Heart right ventricle (tissue), 16 donors: ENCODE measurements at regions of chr14 and their contacts with region 1.

Region 1: GRCh38 chr14:20413045-20413799 is at the start of gene TEP1:
- DNase-seq: peak; percentile 89
- ATAC-seq: peak; percentile 94 to 98 (median 98)
- H3K4me3 ChIP-seq: peak within 1 kb of the TSS; percentile 63 to 92 (median 75)
- H3K27ac ChIP-seq: peak within 1 kb of the TSS; percentile 40 to 98 (median 95)
- H3K4me1 ChIP-seq: peaks cover 0 to 35% (median 13%) of the 10 kb centered on the region in 9 donors
- H3K27me3 ChIP-seq: no peaks in the 10 kb centered on the region
- CTCF ChIP-seq: no peak
- total RNA-seq, gene TEP1: 6.9 to 17.8 (median 8.6) TPM

Region 2: GRCh38 chr14:20375471-20375870 is 37.8 kb before region 1 on chr14:
- intact Hi-C with region 1: no loop called
- DNase-seq: no peak
- ATAC-seq: no peak
- H3K4me3 ChIP-seq: no peak overlapping the region
- H3K27ac ChIP-seq: no peak overlapping the region
- H3K4me1 ChIP-seq: no peaks in the 10 kb centered on the region
- H3K27me3 ChIP-seq: no peaks in the 10 kb centered on the region
- CTCF ChIP-seq: no peak

Region 3: DNA sequence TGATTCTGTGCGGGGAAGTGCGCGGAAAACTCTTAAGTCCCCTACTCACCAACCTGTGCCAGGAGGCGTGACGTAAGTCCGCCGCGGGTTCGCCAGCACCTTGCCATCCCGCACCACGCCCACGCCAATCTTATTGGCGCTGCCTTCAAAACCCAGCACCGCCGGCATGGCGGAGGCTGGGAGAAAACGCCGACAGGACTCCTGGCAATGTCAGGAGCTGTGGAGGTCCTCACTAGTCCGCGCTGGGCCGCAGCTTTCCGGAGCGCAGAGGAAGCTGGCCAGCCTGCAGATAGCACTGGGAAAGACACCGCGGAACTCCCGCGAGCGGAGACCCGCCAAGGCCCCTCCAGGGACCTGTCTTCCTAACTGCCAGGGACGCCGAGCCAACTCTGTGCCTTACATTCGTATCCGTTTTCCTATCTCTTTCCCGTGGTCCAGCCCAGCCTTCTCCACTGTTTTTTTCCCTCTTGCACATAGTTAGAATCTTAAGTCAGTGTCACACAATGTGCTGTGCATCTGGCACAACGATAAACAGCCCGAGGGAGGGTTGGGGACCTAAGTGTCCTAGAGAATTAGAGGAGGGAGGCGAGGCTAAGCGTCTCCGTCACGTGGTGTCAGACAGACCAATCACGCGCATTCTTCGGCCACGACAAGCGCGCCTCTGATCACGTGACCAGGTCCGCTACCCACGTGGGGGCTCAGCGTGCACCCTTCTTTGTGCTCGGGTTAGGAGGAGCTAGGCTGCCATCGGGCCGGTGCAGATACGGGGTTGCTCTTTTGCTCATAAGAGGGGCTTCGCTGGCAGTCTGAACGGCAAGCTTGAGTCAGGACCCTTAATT is 41.5 kb after region 1 on chr14 and contains the starts of genes APEX1 and OSGEP:
- intact Hi-C with region 1: loop called in 7 of 10 experiments (anchors 1 to 5 kb)
- DNase-seq: peak; percentile 96 to 99
- ATAC-seq: peak; percentile 96 to 99 (median 97)
- H3K4me3 ChIP-seq: peak within 1 kb of the TSS; percentile 66 to 98 (median 74)
- H3K27ac ChIP-seq: peak within 1 kb of the TSS; percentile 83 to 97 (median 91)
- H3K4me1 ChIP-seq: peaks cover 0 to 62% (median 33%) of the 10 kb centered on the region in 9 donors
- H3K27me3 ChIP-seq: no peaks in the 10 kb centered on the region
- CTCF ChIP-seq: no peak
- total RNA-seq, gene APEX1: 57.1 to 103 (median 70.6) TPM
- total RNA-seq, gene OSGEP: 17.6 to 25.3 (median 21.8) TPM

Region 4: GRCh38 chr14:20606190-20606901 is 193.1 kb after region 1 on chr14:
- intact Hi-C with region 1: loop called (anchors 1 to 10 kb)
- DNase-seq: peak in 1 of 2 donors; percentile 27
- ATAC-seq: peak in 2 of 8 donors; percentile 28 to 37
- H3K4me3 ChIP-seq: no peak overlapping the region
- H3K27ac ChIP-seq: no peak overlapping the region
- H3K4me1 ChIP-seq: peaks cover 0 to 19% (median 9%) of the 10 kb centered on the region in 9 donors
- H3K27me3 ChIP-seq: no peaks in the 10 kb centered on the region
- CTCF ChIP-seq: peak; percentile 21 to 65 (median 54)

Region 5: GRCh38 chr14:20998664-20999366 is 585.6 kb after region 1 on chr14 and contains the start of gene SLC39A2:
- intact Hi-C with region 1: no loop called
- DNase-seq: peak; percentile 25 to 45
- ATAC-seq: peak; percentile 31 to 69 (median 57)
- H3K4me3 ChIP-seq: no peak within 1 kb of the TSS
- H3K27ac ChIP-seq: no peak within 1 kb of the TSS
- H3K4me1 ChIP-seq: peaks cover 0 to 13% (median 0%) of the 10 kb centered on the region in 9 donors
- H3K27me3 ChIP-seq: no peaks in the 10 kb centered on the region
- CTCF ChIP-seq: no peak
- total RNA-seq, gene SLC39A2: not detected